GM10248 (cell line): ENCODE measurements at regions of chr5 and their contacts with region 1.

Region 1: GRCh38 chr5:38193015-38193581 is 65.3 kb upstream of the EGFLAM start:
- DNase-seq: peak; percentile 74
- CTCF ChIP-seq: peak; percentile 89

Region 2: GRCh38 chr5:37774912-37775483 is 418.1 kb before region 1 on chr5:
- CTCF ChIA-PET with region 1: interaction called, 15 read pairs
- POLR2A ChIA-PET with region 1: no interaction called
- DNase-seq: no peak
- CTCF ChIP-seq: peak; percentile 18

Region 3: GRCh38 chr5:37831821-37832534 is 361.1 kb before region 1 on chr5:
- CTCF ChIA-PET with region 1: interaction called, 70 read pairs
- POLR2A ChIA-PET with region 1: no interaction called
- DNase-seq: no peak
- CTCF ChIP-seq: no peak

Region 4: DNA sequence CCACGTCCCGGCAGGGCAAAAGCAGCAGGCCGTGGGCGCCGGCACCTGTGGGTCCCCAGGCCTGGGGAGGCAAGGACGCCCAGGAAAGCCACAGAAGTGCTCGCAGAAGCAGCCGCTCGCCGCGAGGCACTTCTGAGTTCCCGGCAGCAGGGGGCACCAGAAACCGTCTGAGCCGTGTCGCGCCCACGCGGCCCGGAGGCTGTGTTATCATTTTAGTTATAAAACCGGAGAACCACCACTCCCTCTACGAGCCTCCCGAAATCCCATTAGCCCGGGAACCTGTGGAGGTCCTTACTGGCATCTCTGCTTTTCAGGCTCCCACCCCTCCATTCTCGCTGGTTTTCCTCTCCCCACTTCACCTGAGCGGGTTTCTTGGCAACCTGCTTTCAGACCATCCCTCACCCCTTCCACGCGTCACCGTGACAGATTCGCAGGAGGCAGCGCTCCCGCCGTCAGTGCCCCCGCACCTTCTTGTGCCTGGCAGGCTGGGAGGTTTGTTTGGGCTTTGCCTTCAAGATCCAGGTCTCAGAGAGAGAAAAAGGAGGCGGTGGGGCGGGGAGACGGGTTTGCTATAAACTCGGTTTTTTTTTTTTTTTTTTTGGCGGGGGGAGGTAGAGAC is 355.6 kb before region 1 on chr5:
- CTCF ChIA-PET with region 1: interaction called, 70 read pairs
- POLR2A ChIA-PET with region 1: no interaction called
- DNase-seq: peak; percentile 87
- CTCF ChIP-seq: peak; percentile 86